Mammary epithelial cell (primary cell): ENCODE measurements at regions of chr5 and their contacts with region 1.

Region 1: GRCh38 chr5:80672140-80672736 is 17.5 kb upstream of the DHFR start:
- DNase-seq: peak; percentile 66
- H3K4me3 ChIP-seq: no peak overlapping the region
- H3K27ac ChIP-seq: no peak overlapping the region
- H3K4me1 ChIP-seq: peaks cover 8% of the 10 kb centered on the region
- H3K27me3 ChIP-seq: no peaks in the 10 kb centered on the region
- CTCF ChIP-seq: peak; percentile 89 to 92

Region 2: DNA sequence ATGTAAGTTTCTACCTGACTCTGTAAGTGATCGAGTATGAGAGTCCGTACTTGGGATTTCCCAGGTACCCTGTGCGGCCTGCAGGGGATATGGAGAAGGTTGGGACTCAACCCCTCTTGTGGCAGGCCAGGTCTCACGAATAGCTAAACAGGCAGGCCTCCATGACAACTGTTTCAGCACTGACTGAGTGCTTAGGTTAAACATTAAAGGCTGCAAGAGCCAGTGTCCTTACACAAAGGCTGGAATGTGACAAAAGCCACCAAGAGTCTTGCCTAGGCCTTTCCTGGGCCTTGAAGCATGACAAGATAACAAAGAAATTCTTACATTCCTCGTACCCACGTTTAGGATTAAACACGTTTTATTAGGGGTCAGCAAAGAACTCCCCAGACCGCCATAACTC is 578.4 kb before region 1 on chr5:
- CTCF ChIA-PET with region 1: interaction called, 4 read pairs
- dilution Hi-C with region 1: no loop called
- in situ Hi-C with region 1: no loop called
- intact Hi-C with region 1: loop called (anchors 5 kb)
- DNase-seq: no peak
- H3K4me3 ChIP-seq: no peak overlapping the region
- H3K27ac ChIP-seq: no peak overlapping the region
- H3K4me1 ChIP-seq: no peaks in the 10 kb centered on the region
- H3K27me3 ChIP-seq: no peaks in the 10 kb centered on the region
- CTCF ChIP-seq: no peak

Region 3: GRCh38 chr5:80346055-80346454 is 326.2 kb before region 1 on chr5:
- CTCF ChIA-PET with region 1: no interaction called
- dilution Hi-C with region 1: no loop called
- in situ Hi-C with region 1: no loop called
- intact Hi-C with region 1: loop called (anchors 1 kb)
- DNase-seq: peak; percentile 23
- H3K4me3 ChIP-seq: no peak overlapping the region
- H3K27ac ChIP-seq: no peak overlapping the region
- H3K4me1 ChIP-seq: no peaks in the 10 kb centered on the region
- H3K27me3 ChIP-seq: no peaks in the 10 kb centered on the region
- CTCF ChIP-seq: peak; percentile 31 to 64

Region 4: DNA sequence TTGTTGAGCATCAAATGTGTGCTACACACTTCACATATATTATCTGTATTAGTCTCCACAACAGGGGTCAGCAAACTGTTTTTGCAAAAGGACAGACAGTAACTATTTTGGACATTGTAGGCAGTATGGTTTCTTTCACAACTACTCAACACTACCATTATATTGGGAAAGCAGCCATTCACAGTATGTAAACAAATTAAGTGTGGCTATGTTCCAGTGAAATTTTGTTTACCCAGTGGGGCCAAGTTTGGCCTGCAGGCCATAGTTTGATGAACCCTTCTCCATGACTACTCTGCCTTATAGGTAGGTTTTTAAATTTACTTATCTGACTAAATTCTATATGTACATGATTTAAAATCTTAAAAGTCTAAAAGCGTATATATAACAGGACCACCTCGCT is 197.3 kb before region 1 on chr5:
- CTCF ChIA-PET with region 1: no interaction called
- dilution Hi-C with region 1: no loop called
- in situ Hi-C with region 1: loop called (anchors 5 kb)
- intact Hi-C with region 1: no loop called
- DNase-seq: no peak
- H3K4me3 ChIP-seq: no peak overlapping the region
- H3K27ac ChIP-seq: no peak overlapping the region
- H3K4me1 ChIP-seq: peaks cover 7% of the 10 kb centered on the region
- H3K27me3 ChIP-seq: no peaks in the 10 kb centered on the region
- CTCF ChIP-seq: no peak

Region 5: GRCh38 chr5:80481019-80481893 is 191.0 kb before region 1 on chr5:
- CTCF ChIA-PET with region 1: interaction called, 5 read pairs
- dilution Hi-C with region 1: no loop called
- in situ Hi-C with region 1: loop called (anchors 5 kb)
- intact Hi-C with region 1: loop called (anchors 1 kb)
- DNase-seq: peak; percentile 50
- H3K4me3 ChIP-seq: no peak overlapping the region
- H3K27ac ChIP-seq: no peak overlapping the region
- H3K4me1 ChIP-seq: peaks cover 8% of the 10 kb centered on the region
- H3K27me3 ChIP-seq: no peaks in the 10 kb centered on the region
- CTCF ChIP-seq: peak; percentile 87 to 94

Region 6: DNA sequence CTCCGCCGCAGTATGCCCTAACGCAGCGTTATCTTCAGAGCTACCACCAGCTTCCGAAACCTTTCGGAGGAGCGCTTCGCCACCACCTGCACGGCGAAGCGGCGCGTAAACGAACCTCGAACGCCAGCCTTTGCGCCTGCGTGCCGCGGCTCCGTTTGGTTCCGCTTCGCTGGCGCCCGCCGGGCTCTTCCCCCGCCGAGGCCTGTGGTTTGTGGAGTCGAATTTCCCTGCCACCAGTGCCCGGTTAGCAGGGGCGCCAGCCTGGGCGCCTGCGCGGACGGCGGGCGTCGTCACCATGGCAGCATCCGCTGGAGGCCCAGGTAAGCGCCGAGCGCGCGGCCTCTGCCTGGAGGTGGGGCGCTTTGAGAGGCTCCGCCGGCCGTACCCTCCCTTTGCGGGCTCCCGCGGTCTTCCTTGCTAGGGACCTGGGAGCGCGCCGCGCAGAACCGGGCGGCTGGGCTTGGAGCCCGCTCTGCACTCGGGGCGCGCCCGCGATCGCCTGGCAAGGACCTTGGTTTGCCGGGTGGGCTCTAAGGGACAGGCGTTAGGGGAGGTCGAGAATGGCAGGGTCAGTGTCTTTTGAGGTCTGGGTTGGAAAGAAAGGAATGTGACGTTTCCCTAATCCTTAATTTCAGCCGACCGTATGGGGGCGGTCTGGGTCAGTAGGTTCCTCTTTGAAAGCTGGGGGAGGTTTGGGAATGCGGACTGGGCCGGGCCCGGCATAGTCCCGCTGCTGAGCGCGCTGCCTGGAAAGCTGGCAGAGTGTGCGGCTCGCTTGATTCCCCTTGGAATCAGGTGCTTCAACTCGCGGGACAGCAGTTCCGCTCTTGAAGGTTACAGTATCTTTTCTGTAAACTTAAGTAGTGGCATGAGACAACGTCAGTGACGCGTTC is 184.2 kb before region 1 on chr5 and contains the start of gene FAM151B:
- CTCF ChIA-PET with region 1: no interaction called
- dilution Hi-C with region 1: no loop called
- in situ Hi-C with region 1: no loop called
- intact Hi-C with region 1: loop called (anchors 1 kb)
- DNase-seq: peak; percentile 98
- H3K4me3 ChIP-seq: peak within 1 kb of the TSS; percentile 69 to 73 (median 69)
- H3K27ac ChIP-seq: peak within 1 kb of the TSS; percentile 66
- H3K4me1 ChIP-seq: peaks cover 14% of the 10 kb centered on the region
- H3K27me3 ChIP-seq: no peaks in the 10 kb centered on the region
- CTCF ChIP-seq: peak in 1 of 2 donors; percentile 39
- total RNA-seq, gene FAM151B: 0.73 to 0.83 TPM

Region 7: DNA sequence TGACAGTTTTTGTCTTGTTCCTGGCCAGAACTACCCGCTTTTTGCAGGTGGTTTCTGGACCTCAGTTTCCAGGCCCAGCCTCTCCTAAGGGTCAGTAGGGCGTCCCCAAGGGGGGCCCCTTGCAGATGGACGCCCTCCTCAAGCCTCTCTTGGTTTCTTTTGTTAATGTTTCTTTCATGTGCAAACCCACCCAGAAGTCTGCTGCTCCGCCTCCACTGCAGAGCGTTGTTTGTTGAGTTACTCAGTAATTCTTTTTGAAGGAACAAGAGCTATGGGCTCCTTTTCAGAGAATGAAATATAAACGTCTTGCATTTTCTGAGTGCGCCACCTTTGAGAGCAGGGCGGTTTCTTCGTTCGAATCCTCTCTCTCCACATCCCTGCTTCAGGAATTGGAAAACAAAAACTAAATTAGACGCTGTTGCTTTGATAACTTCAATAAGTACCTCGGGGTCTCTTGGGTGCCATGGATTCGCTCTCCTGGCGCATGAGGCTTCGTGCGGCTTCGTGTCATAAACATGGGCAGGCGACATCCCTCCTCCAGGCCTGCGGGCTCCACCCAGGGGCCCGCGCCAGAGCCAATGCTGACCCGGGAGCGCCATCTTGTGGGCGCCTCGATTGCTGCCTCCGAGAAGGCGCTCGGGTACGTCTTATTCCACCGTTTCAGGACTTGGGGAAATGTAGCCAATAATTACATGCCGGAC is 522.5 kb after region 1 on chr5:
- CTCF ChIA-PET with region 1: interaction called, 13 read pairs
- dilution Hi-C with region 1: no loop called
- in situ Hi-C with region 1: loop called in 1 of 2 experiments (anchors 25 kb)
- intact Hi-C with region 1: no loop called
- DNase-seq: peak; percentile 56
- H3K4me3 ChIP-seq: peak overlapping the region in 2 of 3 experiments; percentile 8 to 21
- H3K27ac ChIP-seq: no peak overlapping the region
- H3K4me1 ChIP-seq: no peaks in the 10 kb centered on the region
- H3K27me3 ChIP-seq: peaks cover 2% of the 10 kb centered on the region
- CTCF ChIP-seq: peak; percentile 78 to 96